OCI-LY7 (cell line): ENCODE measurements at regions of chr14 and their contacts with region 1.

Region 1: DNA sequence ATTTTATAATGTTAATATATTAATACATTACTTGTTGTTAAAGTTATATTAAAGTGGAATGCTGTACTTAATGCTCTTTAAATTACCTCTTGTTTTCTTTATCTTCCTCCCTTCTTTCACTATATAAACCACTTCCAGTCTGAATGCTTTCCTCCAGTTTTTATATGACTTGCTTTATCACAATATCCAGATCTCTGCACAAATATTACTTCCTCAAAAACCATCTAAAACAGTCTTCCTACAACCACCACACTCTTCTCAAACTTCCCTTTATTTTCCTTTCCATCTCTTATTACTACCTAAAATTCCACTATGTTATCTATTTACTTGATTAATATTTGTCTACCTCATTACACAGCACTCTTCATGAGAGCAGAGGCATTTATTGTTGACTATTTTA is 956.6 kb downstream of the LRFN5 start:
- DNase-seq: no peak
- H3K4me3 ChIP-seq: no peak overlapping the region
- H3K27ac ChIP-seq: no peak overlapping the region
- H3K4me1 ChIP-seq: no peaks in the 10 kb centered on the region
- CTCF ChIP-seq: no peak

Region 2: GRCh38 chr14:42269234-42269633 is 294.1 kb before region 1 on chr14:
- CTCF ChIA-PET with region 1: no interaction called
- POLR2A ChIA-PET with region 1: no interaction called
- intact Hi-C with region 1: loop called (anchors 5 kb)
- DNase-seq: no peak
- H3K4me3 ChIP-seq: no peak overlapping the region
- H3K27ac ChIP-seq: no peak overlapping the region
- H3K4me1 ChIP-seq: no peaks in the 10 kb centered on the region
- CTCF ChIP-seq: no peak

Region 3: GRCh38 chr14:42499137-42499536 is 64.2 kb before region 1 on chr14:
- CTCF ChIA-PET with region 1: no interaction called
- POLR2A ChIA-PET with region 1: no interaction called
- intact Hi-C with region 1: no loop called
- DNase-seq: no peak
- H3K4me3 ChIP-seq: no peak overlapping the region
- H3K27ac ChIP-seq: no peak overlapping the region
- H3K4me1 ChIP-seq: no peaks in the 10 kb centered on the region
- CTCF ChIP-seq: no peak

Region 4: DNA sequence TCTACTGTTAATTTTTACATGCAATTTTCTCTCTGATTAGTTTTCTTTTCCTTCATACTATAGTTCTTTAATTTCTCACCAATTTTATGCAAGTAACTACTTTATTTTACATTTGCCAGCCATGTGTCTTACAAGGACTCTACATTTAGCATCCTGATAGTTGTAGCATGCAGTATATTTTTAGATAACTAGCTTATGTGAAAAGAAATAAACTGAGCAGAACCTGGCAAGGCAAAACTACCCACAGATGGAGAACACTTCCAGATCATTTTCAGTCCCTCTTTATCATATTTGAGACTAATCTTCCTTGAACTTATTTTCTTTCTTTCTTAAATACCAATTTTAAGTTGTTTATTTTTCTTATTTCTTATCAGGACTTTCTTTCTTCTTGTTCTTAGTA is 13.0 kb before region 1 on chr14:
- CTCF ChIA-PET with region 1: no interaction called
- POLR2A ChIA-PET with region 1: no interaction called
- intact Hi-C with region 1: no loop called
- DNase-seq: no peak
- H3K4me3 ChIP-seq: no peak overlapping the region
- H3K27ac ChIP-seq: no peak overlapping the region
- H3K4me1 ChIP-seq: no peaks in the 10 kb centered on the region
- CTCF ChIP-seq: no peak

Region 5: DNA sequence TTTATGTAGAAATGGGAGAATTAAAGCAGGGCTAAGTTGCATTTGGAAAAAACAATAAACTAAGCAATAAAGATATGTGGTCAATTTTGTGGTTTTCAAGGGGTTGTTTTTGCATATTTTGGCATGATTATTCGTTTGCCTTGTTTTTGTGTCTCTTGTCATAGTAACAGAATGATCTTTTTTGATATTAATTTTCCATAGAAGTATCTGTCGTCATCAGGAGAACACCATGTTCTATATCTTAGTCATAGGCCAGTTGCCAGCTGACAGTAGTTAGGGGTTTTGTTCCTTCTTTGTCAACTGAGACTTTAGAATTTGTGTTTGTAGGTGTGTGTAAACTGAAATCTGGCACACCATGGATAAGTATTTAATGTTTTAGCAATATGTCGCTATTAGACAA is 398.2 kb after region 1 on chr14:
- CTCF ChIA-PET with region 1: no interaction called
- POLR2A ChIA-PET with region 1: no interaction called
- intact Hi-C with region 1: no loop called
- DNase-seq: no peak
- H3K4me3 ChIP-seq: no peak overlapping the region
- H3K27ac ChIP-seq: no peak overlapping the region
- H3K4me1 ChIP-seq: no peaks in the 10 kb centered on the region
- CTCF ChIP-seq: no peak